Activated T-helper 1 cell treated with anti-CD3 and anti-CD28 coated beads, Interleukin-12 subunit alpha, Interleukin-12 subunit beta, Interleukin-2, Interleukin-4 antibody, amounts not matched to agents 30 ng/mL and 10 ng/mL and 1 ng/mL, durations not matched to agents 14 hours and 24 hours and 36 hours (primary cell): ENCODE measurements at regions of chr11 and their contacts with region 1.

Region 1: GRCh38 chr11:74018331-74019005 is 9.6 kb upstream of the UCP3 start:
- DNase-seq: no peak
- H3K4me3 Mint-ChIP-seq: no peak overlapping the region
- H3K27ac Mint-ChIP-seq: no peak overlapping the region
- H3K4me1 Mint-ChIP-seq: peaks cover 58% of the 10 kb centered on the region
- H3K27me3 Mint-ChIP-seq: no peaks in the 10 kb centered on the region

Region 2: GRCh38 chr11:73995247-73995646 is 23.2 kb before region 1 on chr11:
- intact Hi-C with region 1: loop called (anchors 1 kb)
- DNase-seq: no peak
- H3K4me3 Mint-ChIP-seq: peak overlapping the region; percentile 45
- H3K27ac Mint-ChIP-seq: peak overlapping the region; percentile 94
- H3K4me1 Mint-ChIP-seq: peaks cover 59% of the 10 kb centered on the region
- H3K27me3 Mint-ChIP-seq: no peaks in the 10 kb centered on the region

Region 3: DNA sequence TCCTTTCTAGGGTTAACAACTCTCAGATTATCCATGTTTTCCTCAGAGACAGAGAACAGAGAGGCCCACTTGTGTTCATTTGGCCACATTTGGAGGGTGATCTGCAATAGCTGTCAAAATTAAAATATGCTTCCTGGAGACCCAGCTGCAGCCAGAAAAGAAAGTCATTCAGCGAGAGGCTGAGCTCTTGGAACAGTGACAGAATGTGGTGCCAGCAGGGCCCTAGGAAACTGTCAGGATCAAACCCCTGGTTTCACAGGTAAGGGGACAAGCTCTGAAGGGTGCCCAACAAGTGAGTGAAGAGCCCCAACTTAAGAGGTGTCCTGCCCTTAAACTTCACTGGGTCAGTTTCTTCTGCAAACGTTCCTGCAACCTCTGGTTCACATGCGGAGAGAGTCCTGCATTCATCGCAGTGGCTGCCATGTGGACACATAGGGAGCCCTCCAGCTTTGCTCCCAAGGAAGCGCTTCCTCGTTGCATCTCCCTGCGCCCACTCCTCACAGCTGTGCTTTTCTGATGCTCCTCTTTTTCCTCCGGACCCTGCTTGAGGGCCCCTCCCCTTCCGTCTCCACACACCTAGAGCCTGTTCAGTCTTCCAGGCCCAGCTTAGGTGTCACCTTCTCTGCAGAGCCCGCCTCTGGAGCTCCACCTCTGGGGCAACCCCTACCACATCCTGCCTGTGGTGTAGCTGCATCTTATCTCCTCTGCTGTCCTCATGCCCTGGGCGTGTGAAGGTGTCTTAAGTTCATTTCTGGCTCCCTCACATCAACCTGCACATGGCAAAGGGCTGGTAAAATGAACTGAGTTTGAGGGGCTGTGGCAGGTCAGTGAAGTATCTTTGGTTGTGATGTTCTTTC is 13.5 kb before region 1 on chr11:
- intact Hi-C with region 1: loop called (anchors 1 kb)
- DNase-seq: peak; percentile 84
- H3K4me3 Mint-ChIP-seq: peak overlapping the region; percentile 73
- H3K27ac Mint-ChIP-seq: peak overlapping the region; percentile 98
- H3K4me1 Mint-ChIP-seq: peaks cover 87% of the 10 kb centered on the region
- H3K27me3 Mint-ChIP-seq: no peaks in the 10 kb centered on the region

Region 4: GRCh38 chr11:74030723-74031676 is 12.5 kb after region 1 on chr11:
- intact Hi-C with region 1: loop called (anchors 1 kb)
- DNase-seq: no peak
- H3K4me3 Mint-ChIP-seq: peak overlapping the region; percentile 53
- H3K27ac Mint-ChIP-seq: peak overlapping the region; percentile 86
- H3K4me1 Mint-ChIP-seq: peaks cover 47% of the 10 kb centered on the region
- H3K27me3 Mint-ChIP-seq: no peaks in the 10 kb centered on the region

Region 5: GRCh38 chr11:74055938-74056337 is 37.5 kb after region 1 on chr11:
- intact Hi-C with region 1: no loop called
- DNase-seq: no peak
- H3K4me3 Mint-ChIP-seq: no peak overlapping the region
- H3K27ac Mint-ChIP-seq: no peak overlapping the region
- H3K4me1 Mint-ChIP-seq: peaks cover 10% of the 10 kb centered on the region
- H3K27me3 Mint-ChIP-seq: no peaks in the 10 kb centered on the region